ENCODE measurements at regions of chr19 and their contacts with region 1.

Region 1: GRCh38 chr19:14073261-14073924 is 807 bp downstream of the MISP3 start:
- DNase-seq: peak; percentile 85 to 92
- ATAC-seq: peak; percentile 65
- H3K4me3 ChIP-seq: peak overlapping the region; percentile 52 to 67
- H3K27ac ChIP-seq: peak overlapping the region; percentile 30 to 69
- H3K4me1 ChIP-seq: no peaks in the 10 kb centered on the region
- H3K27me3 ChIP-seq: no peaks in the 10 kb centered on the region

Region 2: DNA sequence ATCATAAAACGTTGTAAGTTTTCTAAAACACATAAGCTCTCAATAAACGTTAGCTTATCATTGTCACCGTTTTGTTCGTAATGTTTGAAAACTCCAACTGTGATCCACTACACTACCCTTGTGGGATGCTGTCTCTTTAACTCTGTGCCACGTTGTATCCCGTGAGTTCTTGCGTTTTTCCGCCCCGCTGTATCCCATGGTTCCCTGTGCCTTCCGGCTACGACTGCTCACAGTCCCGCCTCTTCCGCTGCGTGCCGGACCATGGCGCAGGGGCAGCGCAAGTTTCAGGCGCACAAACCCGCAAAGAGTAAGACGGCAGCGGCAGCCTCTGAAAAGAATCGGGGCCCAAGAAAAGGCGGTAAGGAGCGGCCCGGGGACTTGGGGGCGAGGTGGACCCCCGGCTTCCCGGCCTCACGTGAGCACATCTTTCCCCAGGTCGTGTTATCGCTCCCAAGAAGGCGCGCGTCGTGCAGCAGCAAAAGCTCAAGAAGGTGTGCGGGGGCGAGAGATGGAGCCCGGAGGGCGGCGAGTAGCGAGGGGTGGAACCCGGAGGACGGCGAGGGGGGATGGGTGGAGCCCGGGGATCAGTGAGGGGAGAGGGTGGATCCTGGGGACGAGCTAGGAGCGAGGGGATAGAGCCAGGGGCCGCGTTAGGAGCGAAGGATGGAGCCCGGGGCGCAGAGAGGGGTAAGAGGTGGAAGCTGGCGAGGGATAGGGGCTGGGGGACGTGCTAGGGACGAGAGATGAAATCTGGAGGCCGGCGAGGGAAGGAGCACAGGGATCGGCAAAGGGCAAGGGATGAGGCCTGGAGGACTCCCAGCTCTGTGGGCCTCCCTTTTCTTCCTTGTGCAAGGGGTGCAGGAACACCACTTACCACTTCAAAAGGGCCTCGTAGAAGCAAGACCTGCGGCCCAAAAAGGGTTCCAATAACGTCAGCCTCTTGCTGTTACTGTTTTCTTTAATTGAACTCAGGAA is 298.9 kb before region 1 on chr19 and contains the start of gene C19orf53:
- intact Hi-C with region 1: loop called in 1 of 2 experiments (anchors 10 kb)
- DNase-seq: peak; percentile 95 to 96
- ATAC-seq: peak; percentile 95
- H3K4me3 ChIP-seq: peak within 1 kb of the TSS; percentile 70 to 77
- H3K27ac ChIP-seq: peak within 1 kb of the TSS; percentile 54 to 95
- H3K4me1 ChIP-seq: no peaks in the 10 kb centered on the region
- H3K27me3 ChIP-seq: no peaks in the 10 kb centered on the region
- total RNA-seq, gene C19orf53: 57.8 to 58.1 TPM

Measured in aorta (tissue), 5 donors.